ENCODE measurements at regions of chr2 and their contacts with region 1.

Region 1: GRCh38 chr2:231674587-231675338 is 33.6 kb upstream of the PTMA start:
- DNase-seq: peak; percentile 83 to 91
- ATAC-seq: peak; percentile 65
- H3K4me3 ChIP-seq: no peak overlapping the region
- H3K27ac ChIP-seq: peak overlapping the region; percentile 30 to 87
- H3K4me1 ChIP-seq: peaks cover 0 to 2% of the 10 kb centered on the region in 2 donors
- H3K27me3 ChIP-seq: no peaks in the 10 kb centered on the region

Region 2: GRCh38 chr2:231713730-231714430 is 39.1 kb after region 1 on chr2:
- intact Hi-C with region 1: loop called (anchors 1 kb)
- DNase-seq: peak; percentile 93 to 96
- ATAC-seq: peak; percentile 52
- H3K4me3 ChIP-seq: no peak overlapping the region
- H3K27ac ChIP-seq: peak overlapping the region in 1 of 2 donors; percentile 15
- H3K4me1 ChIP-seq: no peaks in the 10 kb centered on the region
- H3K27me3 ChIP-seq: no peaks in the 10 kb centered on the region

Region 3: DNA sequence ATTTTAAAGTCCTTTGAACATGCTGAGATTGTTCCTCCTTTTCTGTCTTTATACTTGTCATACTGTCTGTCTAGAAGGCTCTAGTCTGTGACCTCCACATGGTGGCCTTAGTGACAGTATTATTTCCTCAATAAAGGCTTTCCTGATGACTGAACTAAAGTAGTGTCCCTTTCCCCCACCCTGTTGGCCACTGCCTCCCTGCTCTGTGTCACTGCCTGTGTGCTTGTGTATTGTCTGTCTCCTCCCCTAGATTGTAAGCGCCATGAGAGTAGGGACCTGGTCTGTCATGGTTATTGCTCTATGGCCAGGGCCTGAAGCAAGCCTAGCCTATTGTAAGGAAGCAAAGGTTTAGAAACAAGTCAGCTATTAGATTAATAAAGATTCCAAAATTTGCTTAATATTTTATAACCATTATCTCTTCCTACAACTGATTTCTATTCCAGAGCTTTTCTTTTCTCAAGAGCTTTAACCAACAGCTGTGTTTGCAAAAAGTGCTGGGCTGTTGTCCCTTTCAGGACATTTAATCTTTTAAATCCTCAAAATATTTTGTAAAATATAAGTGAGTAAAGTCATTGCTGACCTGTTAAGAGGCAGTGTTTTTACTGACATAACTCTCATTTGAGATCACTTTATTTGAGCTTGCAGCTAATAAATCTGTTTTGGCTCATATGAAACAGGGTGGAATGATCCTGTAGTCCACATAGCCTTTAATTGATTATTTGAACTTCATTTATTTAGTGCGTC is 322.2 kb after region 1 on chr2:
- intact Hi-C with region 1: no loop called
- DNase-seq: no peak
- ATAC-seq: no peak
- H3K4me3 ChIP-seq: no peak overlapping the region
- H3K27ac ChIP-seq: no peak overlapping the region
- H3K4me1 ChIP-seq: peaks cover 2 to 3% of the 10 kb centered on the region in 2 donors
- H3K27me3 ChIP-seq: no peaks in the 10 kb centered on the region